Left ventricle myocardium inferior (tissue), 1 donor: ENCODE measurements at regions of chr10 and their contacts with region 1.

Region 1: DNA sequence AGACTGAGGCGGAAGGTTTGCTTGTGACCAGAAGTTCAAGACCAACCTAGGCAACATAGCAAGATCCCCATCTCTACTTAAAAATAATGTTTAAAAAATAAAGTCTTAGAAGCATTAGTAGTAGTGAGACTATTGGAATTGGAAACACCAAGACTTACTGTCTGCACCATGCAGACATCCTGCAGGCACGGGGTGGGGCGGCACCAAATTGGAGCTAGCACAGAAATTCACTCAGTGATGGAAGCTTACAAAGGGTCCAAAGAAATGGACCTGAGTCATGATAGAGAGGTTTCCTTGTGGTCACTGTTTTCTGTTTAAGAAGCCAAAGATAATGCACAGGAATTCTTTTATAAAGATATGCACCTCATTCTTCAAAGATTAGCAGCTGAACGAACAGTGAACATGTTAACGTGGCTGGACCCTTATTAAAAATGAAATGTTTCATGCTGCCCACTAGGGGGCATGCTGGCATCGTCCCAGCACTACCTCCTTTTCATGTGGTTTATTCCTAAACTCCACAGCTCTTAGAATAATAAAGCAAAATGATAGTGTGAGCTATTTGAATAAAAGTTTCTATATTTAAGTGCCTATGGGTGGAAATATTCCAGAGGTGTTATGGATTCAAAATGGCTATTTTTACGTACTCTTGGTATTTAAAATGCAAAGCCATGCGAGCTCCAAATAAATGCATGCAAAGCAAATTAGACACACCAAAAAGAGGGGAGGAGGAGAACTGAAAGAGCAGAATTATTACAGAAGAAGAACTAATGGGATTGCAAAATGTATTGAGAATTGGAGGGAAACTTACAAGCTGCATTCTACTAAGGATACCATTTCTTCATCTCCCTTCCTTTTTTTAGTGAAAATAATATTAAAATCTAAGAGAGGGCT is 28.6 kb downstream of the PDSS1 start:
- DNase-seq: peak; percentile 51
- H3K4me3 ChIP-seq: no peak overlapping the region
- H3K27ac ChIP-seq: no peak overlapping the region
- H3K4me1 ChIP-seq: no peaks in the 10 kb centered on the region
- H3K27me3 ChIP-seq: no peaks in the 10 kb centered on the region
- CTCF ChIP-seq: peak; percentile 82

Region 2: DNA sequence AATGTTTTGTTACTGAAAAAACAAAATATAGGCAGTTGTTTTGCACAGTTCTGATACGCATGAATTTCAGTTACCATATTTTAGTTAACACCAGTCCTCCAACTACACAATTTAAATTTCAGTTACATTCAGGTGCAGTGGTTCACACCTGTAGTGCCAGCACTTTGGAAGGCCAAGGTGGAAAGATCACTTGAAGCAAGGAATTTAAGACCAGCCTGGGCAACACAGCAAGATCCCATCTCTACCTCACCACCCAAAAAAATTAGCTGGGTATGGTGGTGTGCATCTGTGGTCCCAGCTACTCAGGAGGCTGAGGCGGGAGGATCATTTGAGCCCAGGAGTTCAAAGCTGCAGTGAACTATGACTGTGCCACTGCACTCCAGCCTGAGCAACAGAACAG is 89.4 kb after region 1 on chr10:
- intact Hi-C with region 1: no loop called
- DNase-seq: no peak
- H3K4me3 ChIP-seq: no peak overlapping the region
- H3K27ac ChIP-seq: no peak overlapping the region
- H3K4me1 ChIP-seq: peaks cover 13% of the 10 kb centered on the region
- H3K27me3 ChIP-seq: no peaks in the 10 kb centered on the region
- CTCF ChIP-seq: no peak

Region 3: DNA sequence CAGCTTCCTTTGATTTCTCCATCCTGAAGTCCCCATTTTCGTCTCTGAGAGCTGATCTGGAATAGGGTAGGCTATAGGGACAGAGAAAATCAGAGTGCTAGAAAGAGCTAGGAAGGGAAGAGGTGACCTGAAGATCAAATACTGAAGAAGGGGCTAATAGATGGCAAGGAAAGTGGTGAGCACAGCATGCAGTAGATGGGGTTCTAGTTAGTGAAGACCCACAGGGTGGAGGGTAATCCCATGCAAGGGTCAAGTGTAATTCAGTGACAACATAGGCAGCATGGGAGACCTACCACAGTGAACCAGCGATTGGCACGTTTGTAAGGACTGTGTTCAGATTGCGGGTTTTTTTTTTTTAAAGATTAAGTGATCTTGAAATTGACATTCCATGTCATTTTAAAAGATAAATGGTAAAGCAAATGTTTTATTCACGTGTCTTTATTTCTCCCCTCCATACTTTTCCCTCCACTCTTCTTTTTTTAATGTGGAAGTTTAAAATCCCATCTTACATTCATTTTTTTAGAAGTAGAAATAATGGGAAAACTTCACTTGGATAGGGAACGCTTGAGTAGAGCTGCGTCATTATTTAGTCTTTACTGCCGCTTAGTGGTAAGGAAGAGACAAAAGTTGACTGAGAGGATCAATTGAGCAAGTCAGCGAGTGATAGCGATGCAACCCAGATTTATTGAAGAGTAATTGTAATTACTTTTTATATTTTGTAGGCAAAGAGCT is 155.7 kb after region 1 on chr10:
- intact Hi-C with region 1: loop called (anchors 5 kb)
- DNase-seq: no peak
- H3K4me3 ChIP-seq: no peak overlapping the region
- H3K27ac ChIP-seq: no peak overlapping the region
- H3K4me1 ChIP-seq: no peaks in the 10 kb centered on the region
- H3K27me3 ChIP-seq: peaks cover 69% of the 10 kb centered on the region
- CTCF ChIP-seq: peak; percentile 74

Region 4: GRCh38 chr10:27794157-27794556 is 1068.1 kb after region 1 on chr10:
- intact Hi-C with region 1: no loop called
- DNase-seq: no peak
- H3K4me3 ChIP-seq: no peak overlapping the region
- H3K27ac ChIP-seq: no peak overlapping the region
- H3K4me1 ChIP-seq: no peaks in the 10 kb centered on the region
- H3K27me3 ChIP-seq: peaks cover 6% of the 10 kb centered on the region
- CTCF ChIP-seq: peak; percentile 20